K562 (cell line): ENCODE measurements at regions of chr1 and their contacts with region 1.

Region 1: DNA sequence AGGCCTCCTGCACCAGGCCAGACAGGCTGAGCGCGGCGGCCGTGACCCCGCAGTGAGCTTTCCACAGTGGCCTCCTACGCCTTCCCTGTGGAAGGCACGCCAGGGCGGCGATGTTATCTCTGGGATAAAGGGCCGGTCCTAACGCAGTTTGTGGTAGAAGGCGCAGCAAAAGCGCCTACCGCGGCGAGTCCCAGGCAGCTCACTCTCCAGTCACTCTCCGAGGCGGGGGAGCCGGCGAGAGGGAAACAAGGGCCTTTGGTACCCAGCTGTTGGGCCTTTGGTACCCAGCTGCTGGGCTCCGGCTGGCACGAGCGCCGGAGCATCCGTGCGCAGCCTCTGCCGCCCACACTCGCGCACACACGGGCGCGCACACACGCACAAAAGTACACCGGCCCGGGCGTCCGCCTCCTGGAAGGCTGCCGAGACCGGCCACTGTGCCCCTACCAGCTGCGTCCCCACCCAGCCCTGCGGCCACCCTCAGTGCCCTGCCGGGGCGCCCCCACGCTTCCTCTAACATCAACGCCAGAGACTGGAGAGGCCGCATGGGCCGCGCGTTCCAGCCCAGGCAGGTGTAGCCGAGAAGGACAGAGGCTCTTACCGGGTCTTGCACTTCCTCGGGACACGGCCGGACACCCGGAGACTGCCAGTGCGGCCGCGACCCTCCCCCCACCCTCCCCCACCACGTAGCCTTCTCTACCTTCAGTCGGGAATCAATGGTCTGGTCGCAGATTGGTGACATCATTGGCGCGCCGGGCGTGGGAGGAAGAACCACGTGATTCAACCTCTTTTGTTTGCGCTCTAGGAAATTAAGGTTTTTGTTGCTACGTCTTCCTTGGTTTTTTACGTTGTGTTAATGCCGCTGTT is 19.5 kb upstream of the ADAR start:
- DNase-seq: peak; percentile 80 to 94 (median 84)
- ATAC-seq: peak; percentile 92
- H3K4me3 ChIP-seq: peak overlapping the region; percentile 93
- H3K27ac ChIP-seq: peak overlapping the region; percentile 92
- H3K4me1 ChIP-seq: peaks cover 17% of the 10 kb centered on the region in 2 experiments
- H3K27me3 ChIP-seq: no peaks in the 10 kb centered on the region
- CTCF ChIP-seq: no peak
- EP300 ChIP-seq: peak; percentile 66
- POLR2A ChIP-seq: peak; percentile 75
- RAD21 ChIP-seq: peak in 1 of 2 experiments; percentile 25; a peak in 1 of 4 replicates

Region 2: DNA sequence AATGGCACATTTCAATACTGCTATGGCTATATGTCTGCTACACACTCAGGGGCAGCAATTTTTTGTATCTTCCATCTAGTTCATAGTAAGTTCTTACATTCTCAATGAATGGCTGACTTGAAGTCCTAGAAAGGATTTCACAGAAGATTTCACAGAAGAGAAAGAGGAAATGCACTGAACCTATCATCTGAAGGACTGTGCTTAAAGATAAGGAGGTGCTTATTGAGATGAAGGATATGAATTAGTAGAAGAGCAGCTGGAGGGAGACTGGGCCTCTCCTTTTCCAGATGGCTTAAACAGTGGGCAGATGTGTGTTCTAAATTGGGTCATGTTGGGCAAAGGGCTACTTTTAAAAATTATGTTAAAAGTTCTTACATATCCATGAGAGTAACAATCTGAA is 34.1 kb before region 1 on chr1:
- CTCF ChIA-PET with region 1: no interaction called
- POLR2A ChIA-PET with region 1: no interaction called
- in situ Hi-C with region 1: no loop called
- intact Hi-C with region 1: loop called (anchors 1 kb)
- DNase-seq: peak in 1 of 4 experiments; percentile 18
- ATAC-seq: peak; percentile 48; the same call in 2 of the 3 replicates
- H3K4me3 ChIP-seq: no peak overlapping the region
- H3K27ac ChIP-seq: no peak overlapping the region
- H3K4me1 ChIP-seq: peaks cover 0 to 10% of the 10 kb centered on the region in 2 experiments; a peak in 3 of 5 replicates
- H3K27me3 ChIP-seq: no peaks in the 10 kb centered on the region
- CTCF ChIP-seq: no peak
- EP300 ChIP-seq: 0 out of 2 replicates have a peak, but pooled peaks have one; percentile 27
- POLR2A ChIP-seq: no peak
- RAD21 ChIP-seq: no peak

Region 3: DNA sequence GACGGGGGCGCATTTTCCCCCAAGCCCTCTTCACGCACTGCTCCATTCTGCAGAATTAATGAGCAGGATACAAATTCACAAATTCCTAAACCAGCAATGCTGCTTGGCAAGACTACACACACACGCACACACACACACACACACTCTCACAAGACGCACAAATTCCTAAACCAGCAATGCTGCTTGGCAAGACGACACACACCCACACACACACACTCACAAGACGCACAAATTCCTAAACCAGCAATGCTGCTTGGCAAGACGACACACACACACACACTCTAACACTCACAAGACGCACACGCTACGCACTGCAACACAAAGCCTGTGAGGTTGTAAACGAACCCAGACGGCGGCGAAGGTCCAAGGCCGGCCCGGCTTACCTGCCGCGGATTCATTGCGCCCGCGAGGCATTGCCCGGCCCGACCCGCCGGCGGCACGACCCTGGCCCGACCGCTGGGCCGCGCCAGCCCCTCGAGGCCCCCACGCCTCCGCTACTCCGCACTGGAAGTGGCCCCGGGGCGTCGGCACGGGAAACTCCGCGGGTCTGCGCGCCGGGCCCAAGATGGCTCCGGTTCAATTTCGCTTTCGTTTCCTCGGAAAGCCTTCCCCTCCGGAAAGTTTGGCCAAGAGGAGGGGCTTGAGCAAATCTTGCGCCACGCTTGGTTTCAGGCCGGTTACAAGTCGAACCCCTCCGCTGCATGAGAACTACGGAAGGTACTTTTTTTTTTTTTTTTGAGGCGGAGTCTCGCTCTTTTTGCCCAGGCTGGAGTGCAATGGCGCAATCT is 19.7 kb before region 1 on chr1 and contains the start of gene ADAR:
- CTCF ChIA-PET with region 1: no interaction called
- POLR2A ChIA-PET with region 1: interaction called, 7 read pairs
- in situ Hi-C with region 1: no loop called
- intact Hi-C with region 1: loop called (anchors 2 kb)
- DNase-seq: peak; percentile 70 to 85 (median 74)
- ATAC-seq: peak; percentile 89
- H3K4me3 ChIP-seq: peak within 1 kb of the TSS; percentile 81
- H3K27ac ChIP-seq: peak within 1 kb of the TSS; percentile 91
- H3K4me1 ChIP-seq: peaks cover 8 to 26% of the 10 kb centered on the region in 2 experiments
- H3K27me3 ChIP-seq: no peaks in the 10 kb centered on the region
- CTCF ChIP-seq: no peak
- EP300 ChIP-seq: 0 out of 2 replicates have a peak, but pooled peaks have one; percentile 24
- POLR2A ChIP-seq: peak; percentile 33; the same call in 1 of the 2 replicates
- RAD21 ChIP-seq: no peak
- polyA plus RNA-seq, gene ADAR: 30.1 to 41.2 TPM